ENCODE measurements at regions of chr1 and their contacts with region 1.

Region 1: GRCh38 chr1:161962091-161962887 is 61.4 kb downstream of the OLFML2B start:
- DNase-seq: peak; percentile 96
- H3K4me3 ChIP-seq: peak overlapping the region in 2 of 3 experiments; percentile 17 to 80
- H3K27ac ChIP-seq: peak overlapping the region; percentile 98
- H3K4me1 ChIP-seq: peaks cover 21% of the 10 kb centered on the region
- H3K27me3 ChIP-seq: no peaks in the 10 kb centered on the region
- CTCF ChIP-seq: no peak
- POLR2A ChIP-seq: no peak

Region 2: GRCh38 chr1:161013488-161014230 is 948.6 kb before region 1 on chr1:
- CTCF ChIA-PET with region 1: no interaction called
- POLR2A ChIA-PET with region 1: no interaction called
- dilution Hi-C with region 1: no loop called
- intact Hi-C with region 1: no loop called
- DNase-seq: peak; percentile 99
- H3K4me3 ChIP-seq: peak overlapping the region in 2 of 3 experiments; percentile 1 to 21
- H3K27ac ChIP-seq: peak overlapping the region; percentile 99
- H3K4me1 ChIP-seq: peaks cover 37% of the 10 kb centered on the region
- H3K27me3 ChIP-seq: no peaks in the 10 kb centered on the region
- CTCF ChIP-seq: no peak
- POLR2A ChIP-seq: peak; percentile 70

Region 3: GRCh38 chr1:161905269-161905884 is 56.9 kb before region 1 on chr1:
- CTCF ChIA-PET with region 1: no interaction called
- POLR2A ChIA-PET with region 1: interaction called, 3 read pairs
- dilution Hi-C with region 1: no loop called
- intact Hi-C with region 1: loop called (anchors 2 kb)
- DNase-seq: peak; percentile 37
- H3K4me3 ChIP-seq: no peak overlapping the region
- H3K27ac ChIP-seq: no peak overlapping the region
- H3K4me1 ChIP-seq: peaks cover 11% of the 10 kb centered on the region
- H3K27me3 ChIP-seq: no peaks in the 10 kb centered on the region
- CTCF ChIP-seq: peak; percentile 32 to 39
- POLR2A ChIP-seq: no peak

Measured in endothelial cell of umbilical vein (primary cell).